ENCODE measurements at regions of chr3 and their contacts with region 1.

Region 1: GRCh38 chr3:111967651-111968274 is 11.1 kb upstream of the ABHD10 start:
- DNase-seq: no peak
- H3K4me3 ChIP-seq: no peak overlapping the region
- H3K27ac ChIP-seq: peak overlapping the region; percentile 6
- H3K4me1 ChIP-seq: peaks cover 7% of the 10 kb centered on the region
- H3K27me3 ChIP-seq: no peaks in the 10 kb centered on the region
- CTCF ChIP-seq: peak; percentile 83 to 88 (median 85)
- POLR2A ChIP-seq: no peak

Region 2: DNA sequence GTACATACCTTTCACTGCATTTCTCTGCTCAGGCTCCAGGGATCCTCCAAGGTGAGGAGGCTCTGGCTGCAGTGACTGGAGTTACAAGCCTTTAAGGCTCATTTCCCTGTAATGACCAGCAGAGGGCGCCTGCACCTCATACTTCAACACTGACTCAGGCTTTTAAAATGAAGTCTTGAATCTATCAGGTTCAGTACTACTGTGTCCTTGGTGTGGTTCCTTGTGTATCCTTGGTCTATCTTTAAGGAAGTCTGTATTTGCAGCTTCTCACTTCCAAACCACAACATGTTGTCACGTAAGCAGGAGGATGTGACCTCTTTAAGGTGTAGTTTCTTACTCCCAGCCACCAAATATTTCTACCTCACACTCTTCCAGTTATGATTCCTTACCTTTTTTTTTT is 250.2 kb before region 1 on chr3:
- intact Hi-C with region 1: loop called (anchors 5 kb)
- DNase-seq: no peak
- H3K4me3 ChIP-seq: no peak overlapping the region
- H3K27ac ChIP-seq: peak overlapping the region; percentile 18
- H3K4me1 ChIP-seq: peaks cover 10% of the 10 kb centered on the region
- H3K27me3 ChIP-seq: no peaks in the 10 kb centered on the region
- CTCF ChIP-seq: peak; percentile 87 to 98 (median 94)
- POLR2A ChIP-seq: no peak